SK-MEL-5 (cell line): ENCODE measurements at regions of chr15 and their contacts with region 1.

Region 1: GRCh38 chr15:68154923-68155559 is 50.1 kb downstream of the CALML4 start:
- DNase-seq: peak; percentile 75

Region 2: GRCh38 chr15:67863442-67863987 is 291.5 kb before region 1 on chr15:
- in situ Hi-C with region 1: loop called (anchors 25 kb)
- DNase-seq: peak; percentile 71

Region 3: GRCh38 chr15:68097029-68097428 is 58.0 kb before region 1 on chr15:
- in situ Hi-C with region 1: no loop called
- DNase-seq: no peak